ENCODE measurements at regions of chr12 and their contacts with region 1.

Region 1: DNA sequence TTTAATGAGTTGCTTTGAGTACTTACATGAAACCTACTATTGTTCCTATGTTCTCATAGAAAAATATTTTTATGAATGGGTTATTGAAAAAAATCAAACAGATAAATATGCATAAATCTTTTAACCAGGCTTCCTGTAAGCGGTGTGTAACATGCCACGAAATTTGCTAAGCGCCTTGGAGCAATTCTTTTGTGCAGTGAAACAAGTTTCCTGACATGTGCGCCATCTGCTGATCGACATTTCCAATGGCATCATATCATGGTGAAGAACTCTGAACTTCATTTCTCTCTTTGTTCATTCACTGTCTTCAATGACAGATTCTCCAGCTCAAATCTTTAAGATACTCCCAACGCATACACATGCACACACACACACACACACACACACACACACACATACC is 145.6 kb upstream of the NAV3 start:
- DNase-seq: peak in 1 of 3 donors; percentile 68
- ATAC-seq: peak; percentile 54
- H3K4me3 ChIP-seq: no peak overlapping the region
- H3K4me1 ChIP-seq: no peaks in the 10 kb centered on the region
- CTCF ChIP-seq: no peak

Region 2: GRCh38 chr12:77152623-77153193 is 532.4 kb before region 1 on chr12:
- intact Hi-C with region 1: loop called in 1 of 2 experiments (anchors 10 kb)
- DNase-seq: peak in 1 of 3 donors; percentile 38
- ATAC-seq: no peak
- H3K4me3 ChIP-seq: no peak overlapping the region
- H3K4me1 ChIP-seq: no peaks in the 10 kb centered on the region
- CTCF ChIP-seq: no peak

Region 3: DNA sequence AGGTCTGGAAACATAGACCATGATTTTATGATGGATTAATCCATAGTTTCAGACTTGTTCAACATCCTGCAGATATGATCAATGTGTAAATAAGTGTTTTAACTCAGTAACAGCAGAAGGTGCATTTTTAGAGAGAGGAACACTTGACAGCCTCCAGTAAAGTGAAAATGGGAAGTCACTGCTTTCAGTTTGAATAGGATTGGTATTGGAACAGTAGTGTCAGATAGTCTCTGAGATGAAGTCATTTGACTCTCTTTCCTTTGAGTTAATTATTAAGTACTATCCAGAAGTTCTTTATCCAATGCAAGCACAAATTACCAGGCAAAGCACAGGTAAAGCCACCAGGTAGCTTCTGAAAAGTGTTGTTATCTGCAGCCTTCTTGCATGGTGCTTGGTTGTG is 131.1 kb after region 1 on chr12:
- intact Hi-C with region 1: no loop called
- DNase-seq: no peak
- ATAC-seq: no peak
- H3K4me3 ChIP-seq: no peak overlapping the region
- H3K4me1 ChIP-seq: no peaks in the 10 kb centered on the region
- CTCF ChIP-seq: no peak

Measured in mucosa of descending colon (tissue), 3 donors.